ENCODE measurements at regions of chr6 and their contacts with region 1.

Region 1: GRCh38 chr6:118509009-118509617 is 39.0 kb upstream of the PLN start:
- DNase-seq: peak in 1 of 2 donors; percentile 43
- ATAC-seq: peak in 1 of 8 donors; percentile 43
- H3K4me3 ChIP-seq: no peak overlapping the region
- H3K27ac ChIP-seq: peak overlapping the region in 8 of 10 donors; percentile 33 to 83 (median 80)
- H3K4me1 ChIP-seq: peaks cover 0 to 33% (median 17%) of the 10 kb centered on the region in 9 donors
- H3K27me3 ChIP-seq: no peaks in the 10 kb centered on the region
- CTCF ChIP-seq: peak; percentile 39 to 81 (median 71)

Region 2: GRCh38 chr6:118240878-118241528 is 268.1 kb before region 1 on chr6:
- intact Hi-C with region 1: no loop called
- DNase-seq: no peak
- ATAC-seq: no peak
- H3K4me3 ChIP-seq: no peak overlapping the region
- H3K27ac ChIP-seq: no peak overlapping the region
- H3K4me1 ChIP-seq: peaks cover 0 to 4% (median 0%) of the 10 kb centered on the region in 9 donors
- H3K27me3 ChIP-seq: peaks cover 0 to 3% (median 0%) of the 10 kb centered on the region in 7 donors
- CTCF ChIP-seq: no peak

Region 3: DNA sequence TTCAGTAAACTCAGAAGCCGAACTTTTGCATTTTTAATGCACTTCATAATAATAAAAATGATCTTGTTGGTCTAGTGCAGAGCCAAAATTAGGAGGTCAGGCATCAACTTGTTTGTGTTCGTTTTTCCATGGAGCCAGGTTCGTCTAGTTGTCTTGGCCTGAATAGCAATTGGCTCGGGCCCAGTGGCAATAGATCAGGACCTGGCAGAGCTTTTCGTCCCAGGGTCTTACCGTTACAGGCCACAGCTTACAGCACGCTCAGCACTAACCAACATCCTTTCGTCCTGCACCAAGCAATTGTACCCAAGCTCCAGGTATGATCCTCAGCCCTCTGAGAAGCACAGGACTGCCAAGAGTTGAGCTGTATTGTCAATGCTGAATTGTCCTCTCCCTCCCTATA is 201.5 kb before region 1 on chr6:
- intact Hi-C with region 1: loop called in 1 of 10 experiments (anchors 5 kb)
- DNase-seq: peak; percentile 33 to 60
- ATAC-seq: peak; percentile 24 to 90 (median 67)
- H3K4me3 ChIP-seq: no peak overlapping the region
- H3K27ac ChIP-seq: peak overlapping the region; percentile 34 to 83 (median 74)
- H3K4me1 ChIP-seq: peaks cover 0 to 54% (median 28%) of the 10 kb centered on the region in 9 donors
- H3K27me3 ChIP-seq: no peaks in the 10 kb centered on the region
- CTCF ChIP-seq: no peak

Region 4: GRCh38 chr6:118476551-118476950 is 32.6 kb before region 1 on chr6:
- intact Hi-C with region 1: loop called in 1 of 10 experiments (anchors 5 kb)
- DNase-seq: no peak
- ATAC-seq: peak in 5 of 8 donors; percentile 52 to 83 (median 76)
- H3K4me3 ChIP-seq: no peak overlapping the region
- H3K27ac ChIP-seq: peak overlapping the region in 9 of 10 donors; percentile 8 to 66 (median 35)
- H3K4me1 ChIP-seq: peaks cover 0 to 26% (median 11%) of the 10 kb centered on the region in 9 donors
- H3K27me3 ChIP-seq: no peaks in the 10 kb centered on the region
- CTCF ChIP-seq: no peak

Measured in heart right ventricle (tissue), 16 donors.